ENCODE measurements at regions of chr22 and their contacts with region 1.

Region 1: DNA sequence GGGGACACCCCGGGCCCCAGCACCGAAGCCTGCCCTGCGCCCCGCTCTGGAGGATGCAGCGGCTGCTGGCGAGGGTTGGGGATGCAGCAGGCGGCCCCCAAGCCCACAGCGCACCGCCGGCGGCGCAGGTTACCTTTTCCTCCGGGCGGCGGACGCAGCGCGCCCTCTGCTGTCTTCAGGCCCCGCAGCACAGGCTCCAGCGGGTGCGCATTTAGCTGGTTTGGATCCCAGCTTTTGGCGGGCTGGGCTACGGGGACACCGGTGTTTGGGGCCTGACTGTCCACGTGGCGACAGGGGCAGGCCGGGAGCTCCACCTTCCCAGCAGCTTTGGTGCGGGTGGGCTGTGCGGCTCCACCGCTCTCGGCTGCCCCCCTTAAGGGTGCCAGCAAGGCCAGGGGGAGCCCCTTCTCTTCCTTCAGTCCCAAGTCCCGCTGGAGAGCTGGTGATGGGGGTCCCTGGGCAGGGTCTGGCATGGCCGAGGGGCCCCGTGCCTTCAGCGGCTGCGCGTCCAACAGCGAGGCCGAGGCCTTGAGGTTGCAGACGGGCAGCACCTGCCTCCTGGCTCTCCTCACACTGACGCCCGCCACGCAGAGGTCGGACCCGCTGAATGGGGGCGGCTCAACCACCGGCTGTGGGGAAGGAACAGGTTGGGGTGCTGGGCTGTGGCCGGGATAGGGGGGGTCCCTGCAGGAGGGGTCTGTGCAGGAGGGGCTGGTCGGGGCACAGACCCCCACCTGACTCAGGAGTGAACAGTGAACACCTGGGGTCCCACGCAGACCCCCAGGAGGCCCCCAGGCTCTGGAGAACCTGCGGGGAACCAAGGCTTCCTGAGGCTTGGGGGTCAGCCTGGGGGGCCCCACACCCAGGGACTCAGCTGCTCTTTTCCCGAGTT is 18.0 kb upstream of the IL17REL start:
- DNase-seq: peak; percentile 86
- ATAC-seq: peak; percentile 97
- H3K4me3 Mint-ChIP-seq: no peak overlapping the region
- H3K27ac Mint-ChIP-seq: no peak overlapping the region
- H3K4me1 Mint-ChIP-seq: peaks cover 4% of the 10 kb centered on the region
- H3K27me3 Mint-ChIP-seq: no peaks in the 10 kb centered on the region

Region 2: DNA sequence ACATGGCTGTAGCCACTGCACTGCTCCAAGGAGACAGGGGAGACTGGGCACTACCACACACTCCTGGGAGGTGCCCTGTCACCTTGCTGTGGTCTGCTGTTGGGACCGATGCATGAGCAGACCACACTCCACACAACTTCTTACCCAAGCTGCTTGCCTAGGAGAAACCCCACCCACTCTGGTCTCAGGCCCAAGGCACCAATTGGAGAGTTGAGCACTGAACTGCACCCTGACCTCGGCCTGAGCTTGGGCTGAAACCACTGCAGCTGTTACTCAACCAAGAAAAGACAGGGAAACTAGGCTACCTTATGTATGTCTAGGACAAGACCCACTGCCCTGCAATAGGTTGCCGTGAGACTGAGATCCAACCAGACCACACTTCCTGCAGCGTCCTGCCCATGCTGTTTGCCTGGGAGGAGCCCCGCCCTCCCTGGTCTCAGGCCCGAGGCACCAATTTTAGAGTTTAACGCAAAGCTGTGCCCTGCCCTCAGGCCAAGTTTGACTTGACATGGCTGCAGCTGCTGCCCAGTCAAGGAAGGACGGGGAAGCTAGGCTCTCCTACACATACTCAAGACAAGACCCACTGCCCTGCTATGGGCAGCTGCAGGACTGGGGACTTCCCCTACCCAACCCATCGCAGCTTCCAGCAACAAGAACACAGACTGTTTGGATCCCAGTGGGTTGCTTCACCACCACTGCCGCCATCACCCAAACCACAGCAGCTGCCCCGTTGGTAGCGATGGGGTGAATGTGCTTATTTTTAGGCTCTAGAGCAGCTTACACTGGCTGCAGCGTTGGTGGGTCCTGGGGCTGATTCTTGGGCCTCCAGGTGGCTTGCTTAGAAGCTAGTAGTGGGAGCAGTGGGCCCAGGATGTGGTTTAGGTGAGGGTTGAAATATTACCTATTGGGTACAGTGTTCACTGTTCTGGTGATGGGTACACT is 269.6 kb before region 1 on chr22:
- CTCF ChIA-PET with region 1: interaction called, 12 read pairs
- POLR2A ChIA-PET with region 1: no interaction called
- DNase-seq: peak; percentile 67
- ATAC-seq: peak; percentile 71
- H3K4me3 Mint-ChIP-seq: peak overlapping the region; percentile 22
- H3K27ac Mint-ChIP-seq: peak overlapping the region; percentile 78
- H3K4me1 Mint-ChIP-seq: peaks cover 29% of the 10 kb centered on the region
- H3K27me3 Mint-ChIP-seq: peaks cover 5% of the 10 kb centered on the region

Region 3: DNA sequence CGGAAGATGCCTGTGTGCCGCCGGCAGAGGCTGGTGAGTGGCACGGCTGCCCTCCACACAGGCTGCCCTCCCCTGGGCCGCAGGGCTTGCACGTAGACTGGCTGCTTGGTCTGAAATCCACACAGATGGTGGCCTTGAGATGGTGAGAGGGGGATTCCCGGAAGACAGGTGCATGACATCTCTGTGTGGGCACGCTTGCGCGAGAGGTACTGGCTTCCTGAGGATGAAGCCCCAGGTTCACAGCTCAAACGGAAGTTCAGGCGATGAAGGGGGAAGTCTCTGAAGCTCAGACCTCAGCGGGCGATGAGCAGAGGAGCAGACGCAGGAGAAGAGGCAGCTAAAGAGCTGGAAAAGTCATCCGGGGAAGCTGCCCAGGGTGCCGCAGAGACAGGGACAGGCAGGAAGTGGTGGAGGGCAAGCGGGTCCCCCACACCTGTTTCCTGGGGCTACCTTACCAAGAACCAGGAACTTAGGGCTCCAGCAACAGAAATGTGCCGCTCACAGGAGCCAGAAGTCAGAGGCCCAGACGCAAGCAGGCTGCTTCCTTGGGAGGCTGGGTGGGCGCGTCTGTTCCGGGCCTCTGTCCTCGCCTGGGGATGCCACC is 104.9 kb before region 1 on chr22:
- CTCF ChIA-PET with region 1: interaction called, 90 read pairs
- POLR2A ChIA-PET with region 1: interaction called, 3 read pairs
- DNase-seq: peak; percentile 81
- ATAC-seq: peak; percentile 77
- H3K4me3 Mint-ChIP-seq: peak overlapping the region; percentile 67
- H3K27ac Mint-ChIP-seq: peak overlapping the region; percentile 95
- H3K4me1 Mint-ChIP-seq: peaks cover 42% of the 10 kb centered on the region
- H3K27me3 Mint-ChIP-seq: no peaks in the 10 kb centered on the region

Region 4: DNA sequence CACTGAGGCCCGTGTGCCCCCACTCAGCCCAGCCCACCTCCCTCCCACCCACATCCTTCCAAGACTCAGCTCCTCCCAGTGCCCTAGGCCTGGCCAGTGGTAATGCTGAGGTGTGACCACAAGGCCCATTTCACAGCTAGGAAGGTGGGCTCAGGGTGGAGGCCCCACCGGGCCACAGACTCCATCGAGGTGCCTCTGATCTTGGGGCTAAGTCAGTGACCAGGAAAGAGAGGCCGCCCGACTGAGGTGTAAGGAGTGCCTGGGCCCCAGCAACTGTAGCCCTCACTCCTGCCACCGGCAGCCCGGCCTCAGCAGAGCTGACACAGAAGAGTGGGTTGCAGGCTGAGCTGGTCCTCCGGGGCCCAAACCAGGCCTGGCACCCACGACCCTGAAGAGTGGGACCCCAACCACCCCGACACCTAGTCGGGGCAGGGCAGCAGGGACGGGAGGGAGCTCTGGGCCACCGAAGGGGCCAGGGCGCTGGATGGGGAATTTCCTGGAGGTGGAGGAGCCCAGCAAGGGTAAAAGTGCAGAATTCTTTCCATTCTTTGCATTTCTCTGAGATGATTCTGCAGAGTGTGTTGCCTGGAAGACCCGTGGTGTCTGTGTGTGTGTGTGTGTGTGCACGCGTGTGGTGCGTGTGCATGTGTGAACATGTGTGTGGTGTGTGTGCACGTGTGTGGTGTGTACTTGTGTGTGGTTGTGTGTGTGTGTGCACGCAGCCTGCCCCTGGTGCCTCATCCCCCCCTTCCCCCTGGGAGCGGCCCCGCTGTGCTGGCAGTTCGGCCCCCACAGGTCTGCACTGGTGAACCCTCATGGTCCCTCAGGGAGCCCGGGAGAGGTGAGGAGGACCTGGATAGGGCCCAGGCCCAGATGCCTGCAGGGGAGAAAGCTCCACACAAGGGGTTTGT is 78.3 kb before region 1 on chr22:
- CTCF ChIA-PET with region 1: no interaction called
- POLR2A ChIA-PET with region 1: no interaction called
- DNase-seq: no peak
- ATAC-seq: no peak
- H3K4me3 Mint-ChIP-seq: no peak overlapping the region
- H3K27ac Mint-ChIP-seq: no peak overlapping the region
- H3K4me1 Mint-ChIP-seq: no peaks in the 10 kb centered on the region
- H3K27me3 Mint-ChIP-seq: no peaks in the 10 kb centered on the region

Region 5: DNA sequence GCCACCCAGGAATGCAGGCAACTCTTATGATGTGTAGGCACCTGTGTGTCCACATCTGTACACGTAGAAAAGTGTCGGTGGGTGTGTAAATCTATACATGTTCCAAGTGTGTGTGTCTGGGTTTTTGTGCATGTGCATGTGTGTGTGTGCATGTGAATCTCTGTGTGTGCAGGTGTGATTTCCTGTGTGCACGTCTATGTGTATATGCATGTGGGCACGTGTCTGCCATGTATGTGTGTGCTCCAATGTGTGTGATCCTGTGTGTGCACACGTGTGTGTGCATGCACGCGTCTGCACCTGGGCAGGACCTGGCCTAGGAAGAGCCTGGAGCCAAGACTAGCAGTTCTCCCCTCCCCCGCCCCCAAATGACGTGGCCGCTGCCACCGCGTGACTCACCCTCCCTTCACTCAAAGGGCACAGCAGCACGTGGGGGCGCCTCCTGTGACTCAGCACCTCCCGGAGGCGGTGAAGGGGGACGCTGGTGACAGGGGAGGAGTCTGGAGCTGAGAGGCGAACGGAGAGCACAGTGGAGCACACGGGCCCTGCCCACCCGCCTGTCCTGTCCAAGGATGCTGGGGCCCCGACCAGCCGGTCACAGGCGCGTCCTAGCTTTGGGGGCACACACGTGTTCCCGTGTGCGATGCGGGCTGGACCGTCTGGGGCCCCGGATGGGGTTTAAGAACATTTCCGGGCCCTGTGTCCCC is 59.9 kb before region 1 on chr22:
- CTCF ChIA-PET with region 1: interaction called, 10 read pairs
- POLR2A ChIA-PET with region 1: no interaction called
- DNase-seq: peak; percentile 96
- ATAC-seq: peak; percentile 92
- H3K4me3 Mint-ChIP-seq: peak overlapping the region; percentile 76
- H3K27ac Mint-ChIP-seq: peak overlapping the region; percentile 94
- H3K4me1 Mint-ChIP-seq: peaks cover 25% of the 10 kb centered on the region
- H3K27me3 Mint-ChIP-seq: no peaks in the 10 kb centered on the region

Region 6: DNA sequence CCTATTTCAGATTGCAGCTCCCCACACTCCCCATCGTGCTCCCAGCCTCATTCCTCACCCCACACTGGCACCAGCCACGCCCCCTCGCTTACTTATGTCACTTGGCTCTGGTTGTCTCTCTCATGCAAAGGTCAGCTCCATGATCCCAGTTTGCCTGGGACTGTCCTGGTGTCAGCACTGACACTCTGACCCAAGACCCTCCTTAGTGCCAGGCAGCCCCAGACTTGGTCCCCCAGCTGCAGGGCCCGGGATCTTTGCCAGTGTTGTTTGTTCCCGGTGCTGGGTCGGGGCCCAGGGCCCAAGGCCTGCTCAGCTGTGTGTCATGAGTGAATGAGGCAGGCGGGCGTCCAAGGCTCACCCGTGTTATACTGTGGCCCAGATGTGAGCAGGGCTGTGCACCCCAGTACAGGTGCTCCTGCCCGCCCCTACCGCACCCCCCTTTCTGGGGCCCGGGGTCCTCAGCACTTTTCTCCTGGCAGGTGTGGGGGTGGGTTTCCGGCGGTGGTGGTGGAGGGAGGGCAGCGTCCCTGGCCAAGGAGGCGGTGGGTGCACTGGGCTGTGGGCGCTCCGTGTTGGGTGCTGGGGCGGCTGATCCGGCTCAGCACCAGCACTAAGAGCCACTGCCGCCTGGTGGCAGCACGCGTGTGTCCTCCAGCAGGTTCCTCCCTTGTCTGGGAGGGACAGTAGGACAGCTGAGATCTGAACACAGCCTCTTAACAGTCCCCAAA is 37.5 kb before region 1 on chr22:
- CTCF ChIA-PET with region 1: interaction called, 23 read pairs
- POLR2A ChIA-PET with region 1: interaction called, 4 read pairs
- DNase-seq: peak; percentile 75
- ATAC-seq: peak; percentile 91
- H3K4me3 Mint-ChIP-seq: no peak overlapping the region
- H3K27ac Mint-ChIP-seq: no peak overlapping the region
- H3K4me1 Mint-ChIP-seq: peaks cover 1% of the 10 kb centered on the region
- H3K27me3 Mint-ChIP-seq: peaks cover 3% of the 10 kb centered on the region

Region 7: GRCh38 chr22:50148991-50149721 is 118.6 kb after region 1 on chr22:
- CTCF ChIA-PET with region 1: no interaction called
- POLR2A ChIA-PET with region 1: no interaction called
- DNase-seq: peak; percentile 84
- ATAC-seq: peak; percentile 98
- H3K4me3 Mint-ChIP-seq: no peak overlapping the region
- H3K27ac Mint-ChIP-seq: no peak overlapping the region
- H3K4me1 Mint-ChIP-seq: peaks cover 5% of the 10 kb centered on the region
- H3K27me3 Mint-ChIP-seq: no peaks in the 10 kb centered on the region

Measured in activated CD8-positive, alpha-beta T cell treated with anti-CD3 and anti-CD28 coated beads, Interleukin-2, amount 10 ng/mL, durations not matched to agents 7 days and 5 days (primary cell).